ENCODE measurements at regions of chr18 and their contacts with region 1.

Region 1: DNA sequence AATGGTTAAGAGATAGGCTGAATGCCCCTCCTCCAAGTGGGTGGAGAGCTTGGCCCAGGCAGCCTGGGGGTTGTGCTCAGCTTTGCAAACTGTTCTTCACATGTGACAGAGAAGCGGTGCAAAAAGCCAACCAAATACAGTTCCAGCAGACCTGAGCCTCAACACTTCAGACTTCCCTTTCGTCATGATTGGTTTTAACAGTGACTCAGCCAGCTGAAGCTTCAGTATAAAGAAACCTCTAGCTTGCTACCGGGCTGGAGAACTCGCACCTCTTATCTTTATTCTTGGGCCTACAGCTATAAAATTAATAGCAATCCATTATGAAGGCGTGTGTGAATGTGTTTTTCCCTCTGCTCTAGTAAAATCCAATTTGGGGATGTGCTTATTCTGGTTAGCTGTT is 20.0 kb downstream of the SETBP1 start:
- DNase-seq: no peak
- ATAC-seq: no peak
- H3K4me3 ChIP-seq: no peak overlapping the region
- H3K27ac ChIP-seq: no peak overlapping the region
- H3K4me1 ChIP-seq: no peaks in the 10 kb centered on the region
- H3K27me3 ChIP-seq: no peaks in the 10 kb centered on the region; the same call in 1 of the 2 replicates
- CTCF ChIP-seq: no peak
- POLR2A ChIP-seq: no peak
- RAD21 ChIP-seq: no peak

Region 2: DNA sequence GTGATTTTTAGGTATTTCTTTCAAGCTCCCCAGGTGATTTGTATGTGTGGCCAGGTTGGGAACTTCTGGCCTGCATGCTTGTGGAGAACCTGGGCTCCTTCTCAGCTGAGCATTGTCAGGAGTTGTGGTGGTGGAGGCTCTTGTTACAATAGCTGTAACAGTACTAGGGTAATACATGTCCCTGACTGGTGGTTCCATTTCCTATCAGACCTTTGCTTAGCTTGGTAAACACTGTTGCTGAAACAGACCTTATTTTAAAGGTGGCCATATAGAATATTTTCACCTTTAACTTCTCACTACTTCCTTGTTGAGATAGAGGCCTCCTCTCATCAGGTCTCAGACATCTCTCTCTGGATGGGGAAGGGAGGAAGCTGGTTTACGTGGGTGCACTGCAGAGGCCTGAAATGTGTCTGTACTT is 59.3 kb after region 1 on chr18:
- CTCF ChIA-PET with region 1: interaction called, 5 read pairs
- POLR2A ChIA-PET with region 1: no interaction called
- dilution Hi-C with region 1: no loop called
- in situ Hi-C with region 1: loop called (anchors 10 kb)
- intact Hi-C with region 1: no loop called
- DNase-seq: no peak
- ATAC-seq: no peak
- H3K4me3 ChIP-seq: no peak overlapping the region
- H3K27ac ChIP-seq: no peak overlapping the region
- H3K4me1 ChIP-seq: no peaks in the 10 kb centered on the region
- H3K27me3 ChIP-seq: peaks cover 2% of the 10 kb centered on the region; the same call in 1 of the 2 replicates
- CTCF ChIP-seq: no peak
- POLR2A ChIP-seq: no peak
- RAD21 ChIP-seq: no peak

Region 3: GRCh38 chr18:44887227-44887631 is 186.6 kb after region 1 on chr18:
- CTCF ChIA-PET with region 1: no interaction called
- POLR2A ChIA-PET with region 1: no interaction called
- dilution Hi-C with region 1: no loop called
- in situ Hi-C with region 1: no loop called
- intact Hi-C with region 1: no loop called
- DNase-seq: peak; percentile 2
- ATAC-seq: no peak
- H3K4me3 ChIP-seq: no peak overlapping the region
- H3K27ac ChIP-seq: no peak overlapping the region
- H3K4me1 ChIP-seq: no peaks in the 10 kb centered on the region
- H3K27me3 ChIP-seq: no peaks in the 10 kb centered on the region; the same call in 1 of the 2 replicates
- CTCF ChIP-seq: no peak
- POLR2A ChIP-seq: no peak
- RAD21 ChIP-seq: no peak

Region 4: DNA sequence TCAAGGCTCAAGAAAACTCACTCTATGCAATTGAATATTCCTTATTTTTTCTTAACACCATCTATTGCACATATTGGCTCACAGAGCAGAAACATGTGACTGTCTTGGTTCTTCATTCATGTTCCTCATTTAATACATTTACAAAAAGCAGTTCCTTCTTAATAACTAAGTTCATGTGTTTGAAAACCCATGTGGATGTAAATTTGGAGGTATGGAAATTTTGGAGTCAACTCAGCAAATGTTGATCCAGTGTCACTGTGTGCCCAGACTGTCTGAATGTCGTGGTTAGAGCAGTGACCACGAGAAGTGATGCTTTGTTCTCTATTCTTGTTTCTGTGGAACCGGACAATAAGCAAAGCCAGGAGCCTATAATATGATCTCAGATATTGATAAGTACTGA is 279.1 kb after region 1 on chr18:
- CTCF ChIA-PET with region 1: no interaction called
- POLR2A ChIA-PET with region 1: no interaction called
- dilution Hi-C with region 1: no loop called
- in situ Hi-C with region 1: no loop called
- intact Hi-C with region 1: no loop called
- DNase-seq: no peak
- ATAC-seq: no peak
- H3K4me3 ChIP-seq: no peak overlapping the region
- H3K27ac ChIP-seq: no peak overlapping the region
- H3K4me1 ChIP-seq: no peaks in the 10 kb centered on the region
- H3K27me3 ChIP-seq: no peaks in the 10 kb centered on the region
- CTCF ChIP-seq: no peak
- POLR2A ChIP-seq: no peak
- RAD21 ChIP-seq: no peak

Measured in IMR-90 (cell line).